ENCODE measurements at regions of chr14 and their contacts with region 1.

Region 1: DNA sequence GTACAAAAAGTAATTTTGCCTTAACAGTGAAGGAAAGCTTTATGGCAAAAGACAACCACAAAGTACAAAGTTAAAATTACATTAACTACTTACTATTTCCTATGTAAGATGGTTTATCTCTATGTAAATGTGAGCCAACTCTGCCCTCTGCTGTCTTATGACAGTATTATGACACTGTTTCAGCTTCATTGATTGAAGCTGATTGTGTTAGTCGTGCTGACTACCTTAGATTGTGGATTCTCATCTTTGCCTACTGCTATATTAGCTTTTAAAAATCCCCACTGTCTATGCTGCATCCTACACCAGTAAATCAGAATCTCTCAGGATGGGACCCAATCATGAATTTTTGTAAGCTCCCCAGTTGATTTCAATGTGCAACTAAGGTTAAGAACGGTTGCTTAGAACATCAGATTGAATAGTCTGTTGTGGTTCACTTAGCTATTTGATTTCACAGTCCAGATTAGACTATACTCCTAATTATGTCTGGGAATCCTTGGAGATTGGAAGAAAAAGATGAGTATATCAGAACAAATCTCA is 12.2 kb upstream of the SPTB start:
- DNase-seq: peak; percentile 77
- ATAC-seq: peak; percentile 85
- H3K4me3 ChIP-seq: no peak overlapping the region
- H3K27ac ChIP-seq: no peak overlapping the region
- H3K4me1 ChIP-seq: no peaks in the 10 kb centered on the region
- H3K27me3 ChIP-seq: peaks cover 15% of the 10 kb centered on the region
- CTCF ChIP-seq: peak; percentile 68
- POLR2A ChIP-seq: no peak
- RAD21 ChIP-seq: peak; percentile 84

Region 2: DNA sequence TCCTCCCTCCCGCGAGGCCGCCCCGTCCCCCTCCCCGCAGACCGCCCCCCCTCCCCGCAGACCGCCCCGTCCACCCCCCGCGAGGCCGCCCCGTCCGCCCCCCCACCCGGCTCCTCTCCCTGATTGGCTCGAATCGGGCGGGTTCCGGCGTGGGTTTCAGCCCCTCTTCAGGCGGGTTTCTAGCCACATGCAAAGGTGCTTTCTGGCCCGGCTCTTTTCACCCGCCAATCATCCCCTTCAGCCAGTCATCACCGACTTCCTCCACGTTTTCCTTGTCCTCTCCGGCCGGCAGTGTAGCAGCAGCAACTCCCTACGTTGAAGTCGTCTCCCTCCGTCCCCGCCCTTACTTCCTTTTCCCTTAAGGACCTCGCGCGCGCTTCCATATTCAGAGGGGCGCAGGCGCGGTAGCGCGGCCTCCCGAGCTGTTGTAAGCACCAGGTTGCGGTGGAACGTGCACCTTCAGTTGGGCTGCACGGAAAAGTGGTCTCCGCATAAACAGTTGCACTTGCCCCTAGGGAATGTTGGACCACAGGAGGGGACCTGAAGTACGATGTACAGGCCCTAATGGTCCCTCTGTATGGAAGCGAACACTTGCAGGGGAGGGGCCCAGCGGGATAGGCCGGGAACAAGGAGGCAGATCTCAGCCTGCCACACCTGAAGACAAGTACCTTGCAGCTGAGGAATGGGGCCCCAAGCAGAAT is 553.1 kb before region 1 on chr14:
- CTCF ChIA-PET with region 1: no interaction called
- POLR2A ChIA-PET with region 1: no interaction called
- dilution Hi-C with region 1: no loop called
- in situ Hi-C with region 1: no loop called
- intact Hi-C with region 1: loop called (anchors 5 kb)
- DNase-seq: peak; percentile 98
- ATAC-seq: peak; percentile 92
- H3K4me3 ChIP-seq: peak overlapping the region; percentile 68
- H3K27ac ChIP-seq: peak overlapping the region; percentile 78
- H3K4me1 ChIP-seq: no peaks in the 10 kb centered on the region
- H3K27me3 ChIP-seq: no peaks in the 10 kb centered on the region
- CTCF ChIP-seq: no peak
- POLR2A ChIP-seq: no peak; the same call in 1 of the 2 replicates
- RAD21 ChIP-seq: no peak

Region 3: GRCh38 chr14:64510825-64511671 is 380.9 kb before region 1 on chr14:
- CTCF ChIA-PET with region 1: no interaction called
- POLR2A ChIA-PET with region 1: no interaction called
- dilution Hi-C with region 1: no loop called
- in situ Hi-C with region 1: no loop called
- intact Hi-C with region 1: loop called (anchors 5 kb)
- DNase-seq: peak; percentile 73
- ATAC-seq: peak; percentile 64
- H3K4me3 ChIP-seq: no peak overlapping the region
- H3K27ac ChIP-seq: no peak overlapping the region
- H3K4me1 ChIP-seq: peaks cover 7% of the 10 kb centered on the region
- H3K27me3 ChIP-seq: no peaks in the 10 kb centered on the region
- CTCF ChIP-seq: peak; percentile 81
- POLR2A ChIP-seq: 0 out of 2 replicates have a peak, but pooled peaks have one; percentile 18
- RAD21 ChIP-seq: peak; percentile 56

Region 4: GRCh38 chr14:64598404-64598803 is 293.5 kb before region 1 on chr14:
- CTCF ChIA-PET with region 1: no interaction called
- POLR2A ChIA-PET with region 1: no interaction called
- dilution Hi-C with region 1: no loop called
- in situ Hi-C with region 1: no loop called
- intact Hi-C with region 1: no loop called
- DNase-seq: no peak
- ATAC-seq: no peak
- H3K4me3 ChIP-seq: no peak overlapping the region
- H3K27ac ChIP-seq: no peak overlapping the region
- H3K4me1 ChIP-seq: no peaks in the 10 kb centered on the region
- H3K27me3 ChIP-seq: no peaks in the 10 kb centered on the region
- CTCF ChIP-seq: no peak
- POLR2A ChIP-seq: no peak
- RAD21 ChIP-seq: no peak

Region 5: GRCh38 chr14:64764641-64765520 is 127.0 kb before region 1 on chr14:
- CTCF ChIA-PET with region 1: interaction called, 7 read pairs
- POLR2A ChIA-PET with region 1: no interaction called
- dilution Hi-C with region 1: no loop called
- in situ Hi-C with region 1: no loop called
- intact Hi-C with region 1: loop called (anchors 5 kb)
- DNase-seq: peak; percentile 74
- ATAC-seq: peak; percentile 84
- H3K4me3 ChIP-seq: no peak overlapping the region
- H3K27ac ChIP-seq: no peak overlapping the region
- H3K4me1 ChIP-seq: peaks cover 30% of the 10 kb centered on the region
- H3K27me3 ChIP-seq: peaks cover 12% of the 10 kb centered on the region
- CTCF ChIP-seq: peak; percentile 88
- POLR2A ChIP-seq: no peak
- RAD21 ChIP-seq: peak; percentile 89

Region 6: GRCh38 chr14:64823305-64823861 is 68.5 kb before region 1 on chr14:
- CTCF ChIA-PET with region 1: interaction called, 31 read pairs
- POLR2A ChIA-PET with region 1: interaction called, 6 read pairs
- dilution Hi-C with region 1: no loop called
- in situ Hi-C with region 1: no loop called
- intact Hi-C with region 1: loop called (anchors 5 kb)
- DNase-seq: peak; percentile 69
- ATAC-seq: peak; percentile 100
- H3K4me3 ChIP-seq: no peak overlapping the region
- H3K27ac ChIP-seq: no peak overlapping the region
- H3K4me1 ChIP-seq: no peaks in the 10 kb centered on the region; the same call in 1 of the 2 replicates
- H3K27me3 ChIP-seq: peaks cover 44% of the 10 kb centered on the region
- CTCF ChIP-seq: peak; percentile 77
- POLR2A ChIP-seq: no peak
- RAD21 ChIP-seq: peak; percentile 73

Region 7: GRCh38 chr14:64914237-64914971 is 22.5 kb after region 1 on chr14 and contains the start of gene CHURC1:
- CTCF ChIA-PET with region 1: interaction called, 13 read pairs
- POLR2A ChIA-PET with region 1: no interaction called
- dilution Hi-C with region 1: no loop called
- in situ Hi-C with region 1: no loop called
- intact Hi-C with region 1: no loop called
- DNase-seq: peak; percentile 96
- ATAC-seq: peak; percentile 97
- H3K4me3 ChIP-seq: peak within 1 kb of the TSS; percentile 74
- H3K27ac ChIP-seq: peak within 1 kb of the TSS; percentile 75
- H3K4me1 ChIP-seq: peaks cover 4% of the 10 kb centered on the region
- H3K27me3 ChIP-seq: no peaks in the 10 kb centered on the region; the same call in 1 of the 2 replicates
- CTCF ChIP-seq: no peak
- POLR2A ChIP-seq: peak; percentile 96
- RAD21 ChIP-seq: no peak
- total RNA-seq, gene CHURC1: 38.0 and 51.9 TPM in 2 replicates

Measured in IMR-90 (cell line).